HEK293T (cell line): ENCODE measurements at regions of chr3 and their contacts with region 1.

Region 1: GRCh38 chr3:138594150-138594934 is at the start of gene CEP70:
- DNase-seq: peak; percentile 92

Region 2: DNA sequence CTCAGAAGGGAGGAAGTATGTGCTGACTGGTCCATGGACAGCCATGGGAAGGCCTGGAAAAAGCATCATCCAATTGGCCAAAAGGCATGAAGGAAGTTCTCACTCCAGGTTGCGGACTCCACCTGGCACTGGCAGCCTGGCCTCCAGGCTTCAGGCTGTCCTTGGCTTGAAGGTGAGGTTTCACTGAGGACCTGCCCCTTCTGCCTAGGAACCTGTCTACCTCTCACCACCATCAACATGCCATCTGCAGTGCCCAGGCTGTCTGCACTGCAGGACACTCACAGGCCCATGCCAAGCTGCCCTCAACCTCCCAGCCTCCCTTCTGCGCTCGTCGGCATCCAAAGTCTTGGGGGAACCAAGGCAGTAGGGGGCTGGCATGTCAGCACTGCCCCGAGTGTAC is 51.4 kb before region 1 on chr3:
- CTCF ChIA-PET with region 1: no interaction called
- POLR2A ChIA-PET with region 1: no interaction called
- DNase-seq: no peak

Region 3: GRCh38 chr3:138608322-138609135 is 14.2 kb after region 1 on chr3 and contains the start of gene FAIM:
- CTCF ChIA-PET with region 1: interaction called, 3 read pairs
- POLR2A ChIA-PET with region 1: interaction called, 15 read pairs
- DNase-seq: peak; percentile 62

Region 4: DNA sequence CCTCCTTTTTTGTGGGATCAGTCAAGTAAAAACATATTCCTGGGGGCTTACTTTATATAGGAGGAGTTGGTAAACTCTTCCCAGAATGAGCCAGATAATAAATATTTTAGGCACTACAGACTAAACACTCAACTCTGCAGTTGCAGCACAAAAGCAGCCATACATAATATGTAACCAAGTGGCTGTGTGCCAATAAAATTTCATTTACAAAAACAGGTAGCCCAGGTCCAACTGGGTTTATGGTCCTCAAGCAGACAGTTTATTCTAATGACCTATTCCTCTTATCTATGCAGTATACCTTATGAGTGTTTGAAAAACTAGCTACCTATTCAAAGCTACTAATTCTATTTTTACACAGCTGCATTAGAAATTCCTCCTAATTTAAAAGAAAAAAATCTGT is 76.1 kb after region 1 on chr3:
- CTCF ChIA-PET with region 1: no interaction called
- POLR2A ChIA-PET with region 1: no interaction called
- DNase-seq: no peak

Region 5: DNA sequence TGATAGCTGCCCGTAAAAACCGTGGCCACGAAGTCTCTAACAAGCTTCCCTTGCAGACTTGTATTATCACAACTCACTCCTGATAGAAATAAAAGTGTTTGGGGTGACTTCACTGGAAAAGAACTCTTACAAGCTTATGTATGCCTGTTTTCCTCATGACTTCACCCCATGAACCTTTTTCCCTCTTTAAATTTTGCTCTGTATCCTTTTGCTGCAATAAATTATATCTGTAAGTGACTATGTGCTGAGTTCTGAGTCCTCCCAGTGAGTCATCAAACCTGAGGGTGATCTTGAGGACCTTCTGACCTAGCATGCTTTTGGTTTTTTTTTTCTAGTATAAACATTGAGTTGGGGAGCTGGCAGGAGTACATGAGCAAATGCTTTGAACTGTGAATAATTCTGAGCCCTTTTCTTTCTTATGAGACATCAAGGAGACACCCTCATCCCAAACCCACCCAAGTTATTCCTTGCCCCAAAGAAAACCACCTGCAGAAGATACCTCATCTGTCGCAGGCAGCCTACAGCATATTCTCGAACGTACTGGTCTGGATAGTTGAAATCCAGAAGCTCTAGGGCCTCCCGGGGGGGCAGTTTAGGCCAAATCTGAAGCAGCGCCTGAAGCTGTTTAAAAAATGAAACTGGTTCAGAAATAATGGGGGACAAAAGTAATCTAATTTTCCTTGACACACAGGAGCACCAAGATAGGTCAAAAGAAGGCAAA is 100.1 kb after region 1 on chr3:
- CTCF ChIA-PET with region 1: interaction called, 14 read pairs
- POLR2A ChIA-PET with region 1: interaction called, 13 read pairs
- DNase-seq: no peak

Region 6: DNA sequence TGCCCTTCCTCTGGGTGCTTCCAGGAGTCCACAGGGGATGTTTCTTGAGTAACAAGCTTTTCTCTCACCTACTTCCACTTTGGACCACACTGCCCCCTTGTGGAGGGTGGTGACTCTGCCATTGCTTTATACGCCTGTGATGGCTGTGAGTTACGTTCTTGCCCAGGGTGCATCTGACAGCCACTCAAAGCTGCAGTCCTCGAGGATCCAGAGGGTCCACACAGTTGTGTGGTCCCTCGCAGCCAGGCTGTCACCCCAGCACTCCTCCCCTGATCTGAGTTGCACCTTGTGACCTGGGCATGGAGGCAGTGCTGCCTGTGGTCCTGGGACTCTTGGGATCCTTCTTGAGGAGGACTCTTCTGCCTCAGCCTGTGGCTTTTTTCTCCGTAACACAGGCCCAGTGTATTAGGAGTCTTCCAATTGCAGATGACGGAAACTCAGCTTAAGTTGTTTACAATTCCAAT is 329.2 kb after region 1 on chr3:
- CTCF ChIA-PET with region 1: interaction called, 16 read pairs
- POLR2A ChIA-PET with region 1: interaction called, 6 read pairs
- DNase-seq: peak; percentile 79